GM12878 (cell line): ENCODE measurements at regions of chr2 and their contacts with region 1.

Region 1: GRCh38 chr2:196376984-196377877 is 205.9 kb upstream of the STK17B start:
- DNase-seq: peak; percentile 93
- ATAC-seq: peak; percentile 77
- H3K4me3 ChIP-seq: no peak overlapping the region
- H3K27ac ChIP-seq: peak overlapping the region; percentile 99
- H3K4me1 ChIP-seq: peaks cover 29% of the 10 kb centered on the region
- H3K27me3 ChIP-seq: no peaks in the 10 kb centered on the region
- CTCF ChIP-seq: no peak
- EP300 ChIP-seq: 0 out of 4 replicates have a peak, but pooled peaks of 1 of the 2 experiments have one; percentile 4
- POLR2A ChIP-seq: no peak
- RAD21 ChIP-seq: peak; percentile 34; the same call in 1 of the 2 replicates

Region 2: GRCh38 chr2:196263181-196263747 is 114.0 kb before region 1 on chr2:
- CTCF ChIA-PET with region 1: no interaction called
- POLR2A ChIA-PET with region 1: no interaction called
- RAD21 ChIA-PET with region 1: no interaction called
- SMC1A ChIA-PET with region 1: no interaction called
- in situ Hi-C with region 1: no loop called
- intact Hi-C with region 1: loop called (anchors 1 kb)
- DNase-seq: peak; percentile 88
- ATAC-seq: peak; percentile 94
- H3K4me3 ChIP-seq: 0 out of 2 replicates have a peak overlapping the region, but pooled peaks have one; percentile 7
- H3K27ac ChIP-seq: peak overlapping the region; percentile 75
- H3K4me1 ChIP-seq: peaks cover 9% of the 10 kb centered on the region
- H3K27me3 ChIP-seq: no peaks in the 10 kb centered on the region
- CTCF ChIP-seq: no peak
- EP300 ChIP-seq: peak; percentile 20 to 52; a peak in 2 of 4 replicates
- POLR2A ChIP-seq: 0 out of 2 replicates have a peak, but pooled peaks have one; percentile 31
- RAD21 ChIP-seq: no peak

Region 3: DNA sequence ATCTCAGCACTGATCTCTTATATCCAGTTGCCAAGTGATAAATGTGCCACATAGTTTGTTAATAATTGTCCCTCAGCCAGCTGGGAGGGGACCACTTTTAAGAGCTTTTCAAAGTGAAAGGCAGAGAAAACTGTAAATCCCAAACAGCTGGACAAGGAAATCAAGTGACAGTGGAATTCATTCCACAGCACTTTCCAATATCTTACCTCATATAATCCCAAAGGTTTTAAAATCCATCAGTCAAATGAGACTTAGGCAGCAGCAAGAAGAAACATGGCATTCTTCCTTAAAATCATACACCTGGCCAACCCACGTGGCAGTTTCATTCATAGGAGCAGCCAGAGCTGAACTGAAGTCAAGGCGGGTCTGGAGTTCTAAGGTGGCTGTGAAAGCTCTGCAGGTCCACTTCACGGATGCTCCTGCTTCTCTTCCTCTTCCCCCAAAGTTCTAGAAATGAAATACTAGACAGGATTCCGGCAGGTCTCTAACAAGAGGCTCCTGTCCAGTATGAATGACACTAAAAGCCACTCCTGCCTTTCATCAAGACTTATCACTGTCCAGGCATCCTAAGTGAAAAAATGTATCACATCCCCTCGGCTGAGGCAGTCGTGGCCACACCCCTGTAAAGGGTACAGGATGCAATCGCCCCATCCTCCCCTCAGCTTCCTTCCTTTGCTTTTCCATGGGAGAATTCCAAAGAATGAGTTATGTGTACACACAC is 15.5 kb before region 1 on chr2:
- CTCF ChIA-PET with region 1: interaction called, 5 read pairs
- POLR2A ChIA-PET with region 1: no interaction called
- RAD21 ChIA-PET with region 1: interaction called, 3 read pairs
- SMC1A ChIA-PET with region 1: interaction called, 19 read pairs
- in situ Hi-C with region 1: no loop called
- intact Hi-C with region 1: no loop called
- DNase-seq: no peak
- ATAC-seq: no peak
- H3K4me3 ChIP-seq: no peak overlapping the region
- H3K27ac ChIP-seq: no peak overlapping the region
- H3K4me1 ChIP-seq: no peaks in the 10 kb centered on the region; the same call in 1 of the 2 replicates
- H3K27me3 ChIP-seq: no peaks in the 10 kb centered on the region
- CTCF ChIP-seq: no peak
- EP300 ChIP-seq: no peak
- POLR2A ChIP-seq: no peak
- RAD21 ChIP-seq: no peak

Region 4: DNA sequence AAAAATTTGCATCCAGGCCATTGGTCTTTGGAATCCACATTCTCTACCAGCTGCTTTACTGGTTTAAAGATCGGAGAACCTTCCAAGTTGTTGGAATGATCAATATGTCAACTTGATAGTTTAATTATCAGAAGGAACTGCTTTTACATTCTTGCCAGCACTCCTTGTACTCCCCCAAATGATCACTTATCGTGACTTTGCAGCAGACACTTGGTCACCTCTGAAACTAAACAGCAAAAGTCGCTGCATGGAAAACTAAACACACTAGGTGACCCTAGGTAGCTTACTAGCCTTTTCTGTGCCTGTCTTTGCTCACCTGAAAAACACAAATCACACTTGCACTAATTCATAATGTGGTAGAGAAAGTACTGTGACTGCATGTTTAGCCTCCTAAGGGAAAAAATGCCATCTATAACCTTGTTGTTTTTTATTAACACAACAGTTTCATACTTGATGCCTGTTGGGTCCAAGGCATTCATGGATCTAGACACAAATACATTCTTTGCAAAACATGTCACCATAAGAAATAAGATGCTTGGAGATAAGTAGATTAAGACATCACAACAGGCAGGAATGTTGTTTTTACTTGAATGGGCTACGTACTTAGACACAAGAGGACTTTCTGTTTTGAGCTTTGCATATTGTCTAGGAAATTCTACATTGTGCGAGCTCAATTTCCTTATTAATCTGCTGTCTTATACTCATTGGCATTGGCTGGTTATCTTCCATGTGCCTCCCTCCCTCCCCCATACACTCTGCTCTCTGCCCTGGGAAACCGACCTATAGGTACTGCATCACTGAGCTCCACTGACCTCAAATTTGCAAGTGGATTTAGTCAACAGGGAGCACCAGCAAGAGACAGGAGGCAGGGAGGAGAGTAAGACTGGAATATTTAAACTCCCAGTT is 13.3 kb after region 1 on chr2:
- CTCF ChIA-PET with region 1: interaction called, 6 read pairs
- POLR2A ChIA-PET with region 1: no interaction called
- RAD21 ChIA-PET with region 1: interaction called, 17 read pairs
- SMC1A ChIA-PET with region 1: interaction called, 17 read pairs
- in situ Hi-C with region 1: no loop called
- intact Hi-C with region 1: no loop called
- DNase-seq: no peak
- ATAC-seq: peak; percentile 81
- H3K4me3 ChIP-seq: peak overlapping the region; percentile 18; the same call in 1 of the 2 replicates
- H3K27ac ChIP-seq: peak overlapping the region; percentile 38
- H3K4me1 ChIP-seq: peaks cover 22% of the 10 kb centered on the region
- H3K27me3 ChIP-seq: no peaks in the 10 kb centered on the region
- CTCF ChIP-seq: no peak
- EP300 ChIP-seq: no peak
- POLR2A ChIP-seq: no peak
- RAD21 ChIP-seq: no peak

Region 5: DNA sequence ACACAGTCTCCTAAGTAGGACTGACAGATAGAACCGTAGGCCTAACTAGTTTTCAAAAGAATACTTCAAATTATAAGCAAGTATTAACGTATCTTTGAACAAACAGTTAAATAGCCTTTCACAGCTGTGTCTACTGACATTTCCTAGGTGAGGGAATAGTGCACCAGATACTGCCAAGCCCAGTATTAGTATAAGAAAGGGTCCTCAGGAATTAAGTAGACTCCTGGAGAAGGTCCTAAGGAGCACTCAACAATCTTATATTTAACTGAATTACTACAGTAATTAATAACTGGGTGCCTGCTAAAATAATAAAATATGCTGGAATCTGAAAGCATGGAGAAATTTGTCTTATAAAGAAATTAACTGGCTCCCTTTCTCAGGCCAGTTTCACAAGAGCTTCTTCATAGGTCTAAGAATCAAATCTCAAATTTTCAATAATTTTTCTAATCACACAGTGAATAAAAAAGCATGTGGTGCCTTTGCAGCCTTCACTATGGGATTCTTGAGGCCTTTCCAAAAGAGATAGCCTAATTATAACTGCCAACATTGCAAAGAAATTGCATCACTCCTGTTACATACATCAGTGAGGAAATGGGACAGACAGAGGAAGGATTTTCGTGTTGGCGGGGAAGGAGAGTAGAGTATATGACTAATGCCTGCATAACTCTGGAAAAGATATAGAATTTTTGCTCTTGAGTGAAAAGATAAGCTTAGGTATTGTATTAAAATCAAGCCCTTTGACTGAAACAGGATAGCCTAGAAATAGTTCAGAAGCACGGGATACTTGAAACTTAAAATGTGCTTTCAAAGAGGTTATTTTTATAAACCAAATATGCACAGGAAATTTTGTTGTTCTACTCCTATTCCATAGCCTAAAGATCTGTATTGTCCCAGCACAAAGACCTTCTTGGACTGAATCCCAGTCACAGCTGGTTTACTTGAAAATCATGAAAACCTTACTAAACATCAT is 22.8 kb after region 1 on chr2:
- CTCF ChIA-PET with region 1: interaction called, 8 read pairs
- POLR2A ChIA-PET with region 1: interaction called, 8 read pairs
- RAD21 ChIA-PET with region 1: interaction called, 19 read pairs
- SMC1A ChIA-PET with region 1: interaction called, 157 read pairs
- in situ Hi-C with region 1: no loop called
- intact Hi-C with region 1: loop called (anchors 1 kb)
- DNase-seq: no peak
- ATAC-seq: no peak
- H3K4me3 ChIP-seq: peak overlapping the region; percentile 4; the same call in 1 of the 2 replicates
- H3K27ac ChIP-seq: peak overlapping the region; percentile 44
- H3K4me1 ChIP-seq: no peaks in the 10 kb centered on the region
- H3K27me3 ChIP-seq: no peaks in the 10 kb centered on the region
- CTCF ChIP-seq: no peak
- EP300 ChIP-seq: no peak
- POLR2A ChIP-seq: no peak
- RAD21 ChIP-seq: no peak

Region 6: DNA sequence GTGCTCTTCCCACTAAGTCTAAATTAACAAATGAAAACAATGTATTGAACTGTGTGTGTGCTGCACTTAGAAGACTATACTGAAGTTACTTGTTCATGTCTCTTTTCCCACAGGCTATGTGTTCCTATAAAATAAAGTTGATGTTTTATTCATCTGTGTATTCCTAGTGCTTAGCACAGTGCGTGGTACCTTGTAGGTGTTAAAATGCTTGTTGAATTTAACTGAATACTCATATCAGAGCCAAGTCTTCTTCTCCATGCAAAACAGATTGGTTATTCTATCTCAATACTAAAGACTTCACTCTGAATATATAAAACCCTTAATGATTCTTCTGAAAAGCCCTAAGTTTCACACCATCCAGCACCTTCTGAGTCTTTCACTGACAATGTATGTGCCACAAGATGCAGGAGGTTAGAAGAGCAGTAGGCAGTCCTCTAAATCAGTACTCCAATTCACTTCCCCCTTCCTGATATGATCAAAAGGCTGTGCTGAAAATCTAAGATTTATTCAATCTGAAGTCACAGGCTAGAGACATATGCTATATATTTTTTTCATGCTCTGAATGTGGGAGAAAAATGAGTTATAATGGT is 30.5 kb after region 1 on chr2:
- CTCF ChIA-PET with region 1: interaction called, 8 read pairs
- POLR2A ChIA-PET with region 1: interaction called, 8 read pairs
- RAD21 ChIA-PET with region 1: interaction called, 19 read pairs
- SMC1A ChIA-PET with region 1: interaction called, 157 read pairs
- in situ Hi-C with region 1: no loop called
- intact Hi-C with region 1: loop called (anchors 1 kb)
- DNase-seq: no peak
- ATAC-seq: peak; percentile 49
- H3K4me3 ChIP-seq: peak overlapping the region; percentile 56
- H3K27ac ChIP-seq: peak overlapping the region; percentile 71
- H3K4me1 ChIP-seq: peaks cover 30% of the 10 kb centered on the region
- H3K27me3 ChIP-seq: no peaks in the 10 kb centered on the region
- CTCF ChIP-seq: no peak
- EP300 ChIP-seq: no peak
- POLR2A ChIP-seq: no peak
- RAD21 ChIP-seq: no peak

Region 7: DNA sequence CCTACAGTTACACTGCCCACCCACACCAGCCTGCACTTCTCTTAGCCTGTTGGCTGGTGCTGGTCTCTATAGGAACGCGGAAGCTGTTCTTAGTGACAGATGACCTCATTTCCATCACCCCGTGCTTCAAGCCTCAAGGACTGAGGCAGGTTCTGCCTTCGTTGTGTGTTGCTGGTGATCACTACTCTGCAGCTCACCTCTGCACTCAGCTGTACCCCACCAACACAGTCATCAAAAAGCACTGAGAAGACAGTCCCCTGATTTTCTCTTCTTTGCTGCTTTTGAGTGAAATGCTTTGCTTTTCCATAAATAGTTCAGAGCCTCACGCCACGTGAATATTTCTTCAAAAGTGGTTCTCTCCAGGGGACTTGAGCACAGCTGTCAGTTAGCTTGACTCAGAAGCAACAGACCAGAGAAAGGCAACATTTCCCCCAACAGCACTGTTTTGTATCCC is 36.6 kb after region 1 on chr2:
- CTCF ChIA-PET with region 1: interaction called, 8 read pairs
- POLR2A ChIA-PET with region 1: interaction called, 4 read pairs
- RAD21 ChIA-PET with region 1: interaction called, 13 read pairs
- SMC1A ChIA-PET with region 1: interaction called, 15 read pairs
- in situ Hi-C with region 1: no loop called
- intact Hi-C with region 1: loop called (anchors 1 kb)
- DNase-seq: peak; percentile 73
- ATAC-seq: peak; percentile 87
- H3K4me3 ChIP-seq: no peak overlapping the region
- H3K27ac ChIP-seq: peak overlapping the region; percentile 91
- H3K4me1 ChIP-seq: peaks cover 51% of the 10 kb centered on the region
- H3K27me3 ChIP-seq: no peaks in the 10 kb centered on the region
- CTCF ChIP-seq: no peak
- EP300 ChIP-seq: 0 out of 4 replicates have a peak, but pooled peaks of 1 of the 2 experiments have one; percentile 24
- POLR2A ChIP-seq: peak; percentile 74
- RAD21 ChIP-seq: 0 out of 2 replicates have a peak, but pooled peaks have one; percentile 14